Endothelial cell of umbilical vein (primary cell): ENCODE measurements at regions of chr22 and their contacts with region 1.

Region 1: GRCh38 chr22:29394931-29395581 is 6.7 kb upstream of the AP1B1 start:
- DNase-seq: peak; percentile 83
- H3K4me3 ChIP-seq: no peak overlapping the region
- H3K27ac ChIP-seq: no peak overlapping the region
- H3K4me1 ChIP-seq: no peaks in the 10 kb centered on the region
- H3K27me3 ChIP-seq: peaks cover 0 to 2% of the 10 kb centered on the region in 2 experiments
- CTCF ChIP-seq: peak; percentile 73 to 78
- POLR2A ChIP-seq: no peak

Region 2: GRCh38 chr22:29503811-29504372 is 108.8 kb after region 1 on chr22:
- CTCF ChIA-PET with region 1: no interaction called
- POLR2A ChIA-PET with region 1: no interaction called
- dilution Hi-C with region 1: no loop called
- intact Hi-C with region 1: loop called (anchors 5 kb)
- DNase-seq: no peak
- H3K4me3 ChIP-seq: no peak overlapping the region
- H3K27ac ChIP-seq: no peak overlapping the region
- H3K4me1 ChIP-seq: no peaks in the 10 kb centered on the region
- H3K27me3 ChIP-seq: no peaks in the 10 kb centered on the region
- CTCF ChIP-seq: no peak
- POLR2A ChIP-seq: no peak

Region 3: DNA sequence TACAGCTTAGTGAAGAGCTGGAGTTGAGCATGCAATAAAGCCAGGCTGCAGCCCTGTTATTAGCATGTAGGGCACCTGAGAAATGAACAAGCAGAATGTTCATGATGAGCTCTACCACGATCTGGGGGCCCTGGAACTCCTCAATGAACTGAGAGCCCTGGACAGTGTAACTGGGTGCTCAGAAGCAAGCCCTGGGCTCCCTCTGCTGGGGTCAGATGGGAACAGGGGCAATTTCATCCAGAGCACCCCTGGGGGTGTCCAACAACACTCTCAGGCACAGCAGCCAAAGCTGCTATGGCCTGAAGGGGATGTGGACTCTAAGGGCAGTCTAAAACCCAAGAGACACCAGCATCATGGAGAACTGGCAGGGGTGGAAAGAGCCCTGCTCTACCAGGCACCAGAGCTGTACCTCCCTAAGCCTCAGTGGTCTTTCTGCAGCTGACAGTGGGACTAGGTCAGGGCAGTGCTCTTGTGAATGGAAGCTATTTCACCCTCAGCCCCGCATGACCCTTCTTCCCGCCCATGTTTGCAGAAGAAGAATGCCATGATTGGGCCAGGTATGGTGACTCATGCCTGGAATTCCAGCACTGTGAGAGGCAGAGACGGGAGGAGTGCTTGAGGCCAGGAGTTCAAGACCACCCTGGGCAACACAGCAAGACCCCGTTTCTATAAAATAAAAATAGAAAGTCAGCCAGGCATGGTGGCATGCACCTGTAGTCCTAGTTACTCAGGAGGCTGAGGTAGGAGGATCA is 129.6 kb after region 1 on chr22:
- CTCF ChIA-PET with region 1: interaction called, 14 read pairs
- POLR2A ChIA-PET with region 1: no interaction called
- dilution Hi-C with region 1: no loop called
- intact Hi-C with region 1: loop called (anchors 5 kb)
- DNase-seq: peak; percentile 10
- H3K4me3 ChIP-seq: no peak overlapping the region
- H3K27ac ChIP-seq: no peak overlapping the region
- H3K4me1 ChIP-seq: peaks cover 12% of the 10 kb centered on the region
- H3K27me3 ChIP-seq: no peaks in the 10 kb centered on the region
- CTCF ChIP-seq: peak; percentile 4 to 40
- POLR2A ChIP-seq: no peak